ENCODE measurements at regions of chr10 and their contacts with region 1.

Region 1: DNA sequence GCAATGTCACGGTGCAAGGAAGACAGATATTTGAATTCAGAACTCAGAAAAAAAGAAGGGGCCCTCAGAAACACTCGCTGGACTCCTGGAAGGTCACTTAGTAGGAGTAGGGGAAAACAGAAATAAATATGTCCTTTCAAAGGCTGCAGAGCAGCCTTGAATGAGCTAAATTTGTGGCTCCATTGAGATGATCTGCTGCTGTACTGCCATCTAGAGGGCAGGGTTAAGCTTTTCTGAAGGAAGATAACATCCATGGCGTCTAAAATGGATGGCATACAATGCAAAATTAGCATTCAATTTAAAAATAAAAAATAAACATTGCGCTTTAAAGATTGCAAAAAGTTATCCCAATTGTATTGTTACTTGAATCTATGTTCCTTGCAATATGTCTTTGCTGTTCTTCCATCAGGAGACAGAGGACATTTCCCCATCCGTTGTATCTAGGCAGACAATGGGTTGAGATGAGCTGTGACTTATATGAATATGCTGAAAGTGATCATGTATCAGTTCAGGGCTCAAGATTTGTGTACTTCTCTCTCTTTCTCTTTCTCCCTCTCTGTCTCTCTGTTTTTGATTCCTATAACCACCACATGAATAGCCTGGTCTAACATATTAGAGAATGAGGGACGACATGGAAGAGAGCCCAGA is 642.2 kb downstream of the SH2D4B start:
- DNase-seq: peak; percentile 18
- ATAC-seq: peak; percentile 91
- H3K4me3 Mint-ChIP-seq: no peak overlapping the region
- H3K27ac Mint-ChIP-seq: peak overlapping the region; percentile 37
- H3K4me1 Mint-ChIP-seq: peaks cover 10% of the 10 kb centered on the region
- H3K27me3 Mint-ChIP-seq: no peaks in the 10 kb centered on the region
- CTCF ChIP-seq: no peak

Region 2: DNA sequence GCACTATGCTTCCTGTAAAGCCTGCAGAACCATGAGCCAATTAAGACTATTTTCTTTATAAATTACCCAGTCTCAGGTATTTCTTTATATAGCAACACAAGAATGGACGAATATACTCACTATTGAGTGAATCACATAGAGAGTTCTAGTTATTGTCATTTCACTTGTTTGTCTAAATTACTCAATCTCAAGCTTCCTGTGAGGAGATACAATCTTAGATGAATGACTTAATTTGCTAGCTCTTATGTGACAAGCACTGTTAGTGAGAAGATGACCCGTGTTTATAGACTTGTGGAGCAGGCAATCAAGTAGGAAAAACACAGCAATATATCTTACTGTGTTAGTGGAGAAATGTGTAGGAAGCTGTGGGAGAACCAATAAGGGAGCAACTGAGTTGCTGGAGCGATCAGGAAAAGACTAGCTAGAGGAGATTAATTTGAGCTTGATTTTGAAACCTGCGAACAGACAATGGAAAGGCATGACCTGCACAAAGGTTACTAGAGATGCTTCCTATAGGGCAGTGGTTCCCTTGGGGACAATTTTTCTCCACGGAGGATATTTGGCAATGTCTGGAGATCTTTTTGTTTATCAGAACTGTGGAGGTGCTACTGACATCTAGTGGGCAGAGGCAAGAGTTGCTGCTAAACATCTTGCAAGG is 161.1 kb before region 1 on chr10:
- CTCF ChIA-PET with region 1: interaction called, 14 read pairs
- POLR2A ChIA-PET with region 1: no interaction called
- DNase-seq: peak; percentile 51
- ATAC-seq: peak; percentile 93; the same call in 1 of the 2 replicates
- H3K4me3 Mint-ChIP-seq: no peak overlapping the region
- H3K27ac Mint-ChIP-seq: no peak overlapping the region
- H3K4me1 Mint-ChIP-seq: peaks cover 4% of the 10 kb centered on the region
- H3K27me3 Mint-ChIP-seq: no peaks in the 10 kb centered on the region
- CTCF ChIP-seq: peak; percentile 48

Region 3: DNA sequence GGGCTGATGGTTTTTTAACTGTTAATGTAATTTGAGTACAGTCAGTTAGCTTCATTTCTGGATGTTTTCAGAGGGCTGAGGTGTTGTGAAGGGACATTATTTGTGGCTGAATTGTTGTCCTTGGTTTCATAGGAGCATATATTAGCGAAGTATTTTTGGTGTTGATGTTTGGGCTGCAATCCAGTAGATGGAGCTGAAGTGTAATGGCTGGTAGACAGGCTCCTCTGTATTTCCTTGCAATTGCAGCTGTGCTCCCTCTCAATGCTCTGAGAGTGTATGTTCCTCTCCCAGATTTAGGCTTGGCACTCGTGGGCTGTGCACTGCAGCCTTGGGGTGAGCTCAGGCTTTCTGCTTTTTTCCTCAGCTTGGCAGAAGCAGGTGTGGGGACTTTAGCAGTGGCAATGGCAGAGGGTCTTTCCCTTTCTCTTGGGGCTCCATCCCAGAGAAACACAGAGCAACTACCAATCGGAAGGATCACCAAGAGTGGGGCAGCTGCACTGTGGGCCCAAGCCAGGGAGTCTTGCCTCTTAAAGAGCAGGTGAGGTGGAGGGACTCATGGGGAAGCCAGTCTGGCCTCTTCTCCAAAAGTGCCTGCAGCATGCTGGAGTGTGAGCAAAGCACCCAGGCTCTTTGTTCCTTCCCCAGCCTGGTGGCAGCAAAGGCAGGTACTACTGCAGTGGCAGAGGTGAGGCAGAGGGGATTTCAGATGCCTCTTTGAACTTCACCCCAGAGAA is 97.9 kb before region 1 on chr10:
- CTCF ChIA-PET with region 1: interaction called, 25 read pairs
- POLR2A ChIA-PET with region 1: no interaction called
- DNase-seq: peak; percentile 27
- ATAC-seq: peak; percentile 92
- H3K4me3 Mint-ChIP-seq: no peak overlapping the region
- H3K27ac Mint-ChIP-seq: no peak overlapping the region; the same call in 1 of the 2 replicates
- H3K4me1 Mint-ChIP-seq: peaks cover 2% of the 10 kb centered on the region
- H3K27me3 Mint-ChIP-seq: no peaks in the 10 kb centered on the region
- CTCF ChIP-seq: no peak

Region 4: GRCh38 chr10:81192221-81192788 is 12.4 kb after region 1 on chr10:
- CTCF ChIA-PET with region 1: interaction called, 17 read pairs
- POLR2A ChIA-PET with region 1: no interaction called
- DNase-seq: no peak
- ATAC-seq: no peak
- H3K4me3 Mint-ChIP-seq: no peak overlapping the region
- H3K27ac Mint-ChIP-seq: no peak overlapping the region
- H3K4me1 Mint-ChIP-seq: peaks cover 12% of the 10 kb centered on the region
- H3K27me3 Mint-ChIP-seq: no peaks in the 10 kb centered on the region
- CTCF ChIP-seq: no peak

Region 5: DNA sequence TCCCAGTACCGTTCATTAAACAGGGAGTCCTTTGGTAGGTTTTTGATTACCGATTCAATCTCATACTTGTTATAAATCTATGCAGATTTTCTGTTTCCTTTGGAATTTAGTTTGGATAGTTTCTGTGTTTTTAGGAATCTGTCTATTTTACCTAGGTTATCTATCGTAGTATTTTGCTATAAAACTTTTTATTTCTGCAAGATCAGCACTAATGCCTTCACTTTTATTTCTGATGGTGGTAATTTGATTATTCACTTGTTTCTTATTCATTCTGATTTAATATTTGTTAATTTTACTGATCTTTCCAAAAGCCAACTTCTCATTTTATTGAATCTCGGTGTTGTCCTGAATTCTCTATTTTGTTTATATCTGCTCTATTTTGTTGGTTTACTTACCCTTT is 117.4 kb after region 1 on chr10:
- CTCF ChIA-PET with region 1: no interaction called
- POLR2A ChIA-PET with region 1: no interaction called
- DNase-seq: no peak
- ATAC-seq: no peak
- H3K4me3 Mint-ChIP-seq: no peak overlapping the region
- H3K27ac Mint-ChIP-seq: no peak overlapping the region
- H3K4me1 Mint-ChIP-seq: no peaks in the 10 kb centered on the region
- H3K27me3 Mint-ChIP-seq: no peaks in the 10 kb centered on the region
- CTCF ChIP-seq: no peak